ENCODE measurements at regions of chr6 and their contacts with region 1.

Region 1: GRCh38 chr6:113292646-113293422 is 564.3 kb upstream of the MARCKS start:
- DNase-seq: no peak
- H3K4me3 ChIP-seq: no peak overlapping the region
- H3K27ac ChIP-seq: no peak overlapping the region
- H3K4me1 ChIP-seq: no peaks in the 10 kb centered on the region
- H3K27me3 ChIP-seq: no peaks in the 10 kb centered on the region
- CTCF ChIP-seq: no peak

Region 2: DNA sequence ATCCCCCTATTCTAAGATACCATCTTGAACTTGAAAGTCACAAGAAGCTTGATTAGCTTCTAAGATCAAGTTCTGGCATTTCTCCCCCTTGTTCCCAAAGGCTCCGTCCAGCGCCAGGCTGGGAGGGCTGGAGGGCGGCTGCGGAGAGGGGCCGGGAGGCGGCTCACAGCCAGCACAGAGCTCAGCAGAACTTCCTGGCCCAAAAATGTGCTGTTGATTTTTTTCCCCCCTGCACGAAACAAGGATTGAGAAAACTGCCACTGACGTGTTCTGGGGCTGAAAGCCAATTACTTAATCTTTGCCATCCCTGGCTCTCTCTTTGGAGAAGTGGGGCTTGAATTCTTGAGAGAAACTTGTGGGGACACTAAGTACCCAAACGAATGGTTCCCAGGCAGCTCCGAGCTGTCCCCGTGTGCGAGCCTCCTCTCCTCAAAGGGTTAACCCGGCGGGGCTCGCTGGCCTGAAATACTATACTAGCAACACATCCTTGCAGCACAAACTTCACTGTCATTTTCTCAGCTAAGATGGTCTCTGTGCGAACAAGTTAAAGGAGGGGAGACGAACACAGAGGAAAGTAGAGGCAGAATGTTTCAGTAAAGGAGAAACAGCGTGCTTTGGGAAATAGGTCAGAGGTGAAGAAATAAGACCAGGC is 1687.6 kb before region 1 on chr6:
- CTCF ChIA-PET with region 1: no interaction called
- POLR2A ChIA-PET with region 1: no interaction called
- intact Hi-C with region 1: no loop called
- DNase-seq: peak in 1 of 2 experiments; percentile 34
- H3K4me3 ChIP-seq: peak overlapping the region; percentile 79
- H3K27ac ChIP-seq: peak overlapping the region; percentile 95
- H3K4me1 ChIP-seq: peaks cover 37% of the 10 kb centered on the region
- H3K27me3 ChIP-seq: no peaks in the 10 kb centered on the region
- CTCF ChIP-seq: no peak

Region 3: DNA sequence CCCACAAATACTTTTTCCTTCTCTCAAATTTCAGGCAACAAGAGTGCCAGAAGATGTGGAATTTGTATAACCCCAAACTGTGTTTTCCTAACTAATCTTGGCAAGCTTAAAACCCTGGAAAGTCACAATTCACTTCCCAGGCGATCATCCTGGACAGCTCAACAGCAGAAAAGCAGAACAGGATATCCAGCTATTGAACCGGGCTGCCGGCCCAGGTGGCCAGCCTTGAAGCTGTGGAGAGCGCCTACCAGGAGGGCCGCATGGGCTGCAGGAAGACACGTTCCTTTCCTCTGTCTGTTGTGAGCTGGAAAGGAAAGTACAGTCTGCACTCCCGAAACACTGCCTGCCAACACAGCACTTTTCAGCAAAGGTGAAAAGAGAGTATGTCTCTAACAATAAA is 155.4 kb before region 1 on chr6:
- CTCF ChIA-PET with region 1: no interaction called
- POLR2A ChIA-PET with region 1: no interaction called
- intact Hi-C with region 1: no loop called
- DNase-seq: no peak
- H3K4me3 ChIP-seq: no peak overlapping the region
- H3K27ac ChIP-seq: no peak overlapping the region
- H3K4me1 ChIP-seq: no peaks in the 10 kb centered on the region
- H3K27me3 ChIP-seq: no peaks in the 10 kb centered on the region
- CTCF ChIP-seq: no peak

Region 4: GRCh38 chr6:113258771-113259170 is 34.1 kb before region 1 on chr6:
- CTCF ChIA-PET with region 1: no interaction called
- POLR2A ChIA-PET with region 1: no interaction called
- intact Hi-C with region 1: no loop called
- DNase-seq: no peak
- H3K4me3 ChIP-seq: no peak overlapping the region
- H3K27ac ChIP-seq: no peak overlapping the region
- H3K4me1 ChIP-seq: no peaks in the 10 kb centered on the region
- H3K27me3 ChIP-seq: no peaks in the 10 kb centered on the region
- CTCF ChIP-seq: no peak

Region 5: GRCh38 chr6:113340371-113340770 is 47.5 kb after region 1 on chr6:
- CTCF ChIA-PET with region 1: no interaction called
- POLR2A ChIA-PET with region 1: interaction called, 35 read pairs
- intact Hi-C with region 1: no loop called
- DNase-seq: no peak
- H3K4me3 ChIP-seq: no peak overlapping the region
- H3K27ac ChIP-seq: no peak overlapping the region
- H3K4me1 ChIP-seq: no peaks in the 10 kb centered on the region
- H3K27me3 ChIP-seq: no peaks in the 10 kb centered on the region
- CTCF ChIP-seq: no peak